Caco-2 (cell line): ENCODE measurements at regions of chr5 and their contacts with region 1.

Region 1: DNA sequence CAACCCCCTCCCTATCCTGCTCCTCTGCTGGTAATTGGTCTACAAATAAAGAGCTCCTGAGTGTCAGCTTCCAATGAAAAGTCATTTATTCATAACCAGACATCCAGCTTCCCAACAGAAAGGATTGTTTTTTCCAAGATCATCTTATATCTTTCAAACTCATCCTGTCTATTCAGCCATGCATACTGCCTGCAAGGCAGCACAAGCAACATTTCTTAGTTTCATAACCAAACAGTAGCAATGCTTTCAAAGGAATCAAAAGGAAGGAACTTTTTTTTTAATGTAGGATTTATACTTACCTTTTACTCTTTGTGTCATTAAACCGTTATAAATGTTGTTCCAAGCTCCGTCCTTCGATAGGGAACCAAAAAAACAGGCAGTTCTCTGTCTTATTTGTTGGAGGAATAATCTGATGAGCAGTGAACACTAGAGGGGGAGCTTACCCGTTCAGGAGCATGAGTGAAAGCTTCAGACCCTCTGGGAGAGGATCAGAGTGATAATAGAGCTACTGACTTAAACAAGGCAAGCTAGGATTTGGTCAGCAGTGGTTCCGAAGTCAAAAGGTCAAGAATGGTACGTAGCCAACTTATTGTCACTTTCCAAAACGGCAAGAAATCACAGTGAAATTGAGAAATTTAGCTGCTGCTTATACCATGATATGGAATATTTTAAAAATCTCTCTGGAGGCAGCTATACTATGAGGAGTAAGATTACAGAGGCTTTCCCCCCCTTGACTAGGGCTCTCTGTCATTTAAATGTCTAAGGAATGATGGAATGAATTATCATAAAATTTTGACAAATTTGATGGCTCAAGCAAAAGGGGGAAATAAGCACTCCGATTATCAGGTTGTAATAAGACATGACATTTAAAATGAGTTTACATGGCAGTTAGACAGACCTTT is 892.9 kb downstream of the NR2F1-AS1 start:
- DNase-seq: peak; percentile 38 to 40
- H3K4me3 ChIP-seq: no peak overlapping the region
- H3K4me3 Mint-ChIP-seq: no peak overlapping the region
- H3K27ac Mint-ChIP-seq: no peak overlapping the region
- H3K4me1 ChIP-seq: no peaks in the 10 kb centered on the region
- H3K4me1 Mint-ChIP-seq: no peaks in the 10 kb centered on the region
- H3K27me3 ChIP-seq: no peaks in the 10 kb centered on the region
- H3K27me3 Mint-ChIP-seq: no peaks in the 10 kb centered on the region
- CTCF ChIP-seq: peak; percentile 43 to 44

Region 2: GRCh38 chr5:93044859-93045666 is 357.0 kb after region 1 on chr5:
- CTCF ChIA-PET with region 1: no interaction called
- POLR2A ChIA-PET with region 1: no interaction called
- intact Hi-C with region 1: loop called (anchors 10 kb)
- DNase-seq: no peak
- H3K4me3 ChIP-seq: no peak overlapping the region
- H3K4me3 Mint-ChIP-seq: no peak overlapping the region
- H3K27ac Mint-ChIP-seq: no peak overlapping the region
- H3K4me1 ChIP-seq: no peaks in the 10 kb centered on the region
- H3K4me1 Mint-ChIP-seq: no peaks in the 10 kb centered on the region
- H3K27me3 ChIP-seq: no peaks in the 10 kb centered on the region
- H3K27me3 Mint-ChIP-seq: no peaks in the 10 kb centered on the region
- CTCF ChIP-seq: no peak

Region 3: DNA sequence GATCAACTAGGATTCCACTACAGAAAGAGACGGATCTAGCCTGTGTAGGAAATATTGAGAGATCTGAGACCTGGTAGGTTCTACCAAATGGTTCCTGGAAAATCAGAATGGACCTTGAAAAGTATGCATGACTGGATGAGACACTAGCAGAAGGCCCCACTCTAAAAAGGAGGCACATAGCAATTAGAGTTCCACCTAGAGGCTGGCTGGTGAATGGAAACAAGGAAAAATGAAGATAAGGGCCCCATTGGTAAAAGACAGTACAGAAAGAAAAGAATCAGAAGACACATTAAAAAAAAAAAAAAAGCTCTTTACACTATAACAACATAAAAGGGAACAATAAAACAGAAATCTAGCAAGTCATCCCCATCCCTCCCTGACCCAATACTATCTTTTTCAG is 374.5 kb after region 1 on chr5:
- CTCF ChIA-PET with region 1: no interaction called
- POLR2A ChIA-PET with region 1: no interaction called
- intact Hi-C with region 1: loop called (anchors 1 kb)
- DNase-seq: peak in 1 of 2 experiments; percentile 22
- H3K4me3 ChIP-seq: no peak overlapping the region
- H3K4me3 Mint-ChIP-seq: no peak overlapping the region
- H3K27ac Mint-ChIP-seq: no peak overlapping the region
- H3K4me1 ChIP-seq: no peaks in the 10 kb centered on the region
- H3K4me1 Mint-ChIP-seq: no peaks in the 10 kb centered on the region
- H3K27me3 ChIP-seq: no peaks in the 10 kb centered on the region
- H3K27me3 Mint-ChIP-seq: no peaks in the 10 kb centered on the region
- CTCF ChIP-seq: peak; percentile 27 to 55